A673 (cell line): ENCODE measurements at regions of chr20 and their contacts with region 1.

Region 1: GRCh38 chr20:266596-267562 is 9.4 kb downstream of the DEFB132 start:
- DNase-seq: peak; percentile 92
- H3K4me3 ChIP-seq: peak overlapping the region; percentile 49
- H3K27ac ChIP-seq: peak overlapping the region; percentile 41
- H3K4me1 ChIP-seq: peaks cover 5% of the 10 kb centered on the region
- H3K27me3 ChIP-seq: no peaks in the 10 kb centered on the region
- CTCF ChIP-seq: peak; percentile 97

Region 2: GRCh38 chr20:87372-87771 is 179.5 kb before region 1 on chr20 and contains the start of gene DEFB125:
- CTCF ChIA-PET with region 1: no interaction called
- POLR2A ChIA-PET with region 1: no interaction called
- intact Hi-C with region 1: no loop called
- DNase-seq: no peak
- H3K4me3 ChIP-seq: no peak within 1 kb of the TSS
- H3K27ac ChIP-seq: no peak within 1 kb of the TSS
- H3K4me1 ChIP-seq: no peaks in the 10 kb centered on the region
- H3K27me3 ChIP-seq: peaks cover 56% of the 10 kb centered on the region
- CTCF ChIP-seq: no peak
- total RNA-seq, gene DEFB125: not detected in 2 replicates

Region 3: DNA sequence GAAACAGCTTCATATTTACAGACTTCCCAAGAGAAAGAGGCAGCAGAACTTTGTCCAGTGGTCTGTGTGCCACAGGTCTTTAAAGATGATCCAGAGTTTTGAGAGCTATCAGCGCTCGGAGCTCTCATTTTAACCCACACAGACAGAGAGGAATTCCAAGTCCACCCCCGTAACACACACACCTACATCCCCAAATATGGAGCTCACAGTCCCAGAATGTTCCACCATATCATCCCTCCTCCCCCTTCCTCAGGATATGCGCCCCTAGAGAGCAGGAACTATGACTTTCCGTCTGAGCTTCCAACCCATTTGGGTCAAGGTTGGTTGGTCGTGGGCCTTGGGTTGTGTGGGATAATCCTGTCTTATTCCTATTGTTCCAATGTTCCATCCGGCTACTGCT is 77.3 kb before region 1 on chr20 and contains the start of gene DEFB128:
- CTCF ChIA-PET with region 1: no interaction called
- POLR2A ChIA-PET with region 1: no interaction called
- intact Hi-C with region 1: no loop called
- DNase-seq: no peak
- H3K4me3 ChIP-seq: no peak within 1 kb of the TSS
- H3K27ac ChIP-seq: no peak within 1 kb of the TSS
- H3K4me1 ChIP-seq: no peaks in the 10 kb centered on the region
- H3K27me3 ChIP-seq: peaks cover 12% of the 10 kb centered on the region
- CTCF ChIP-seq: no peak
- total RNA-seq, gene DEFB128: not detected in 2 replicates

Region 4: DNA sequence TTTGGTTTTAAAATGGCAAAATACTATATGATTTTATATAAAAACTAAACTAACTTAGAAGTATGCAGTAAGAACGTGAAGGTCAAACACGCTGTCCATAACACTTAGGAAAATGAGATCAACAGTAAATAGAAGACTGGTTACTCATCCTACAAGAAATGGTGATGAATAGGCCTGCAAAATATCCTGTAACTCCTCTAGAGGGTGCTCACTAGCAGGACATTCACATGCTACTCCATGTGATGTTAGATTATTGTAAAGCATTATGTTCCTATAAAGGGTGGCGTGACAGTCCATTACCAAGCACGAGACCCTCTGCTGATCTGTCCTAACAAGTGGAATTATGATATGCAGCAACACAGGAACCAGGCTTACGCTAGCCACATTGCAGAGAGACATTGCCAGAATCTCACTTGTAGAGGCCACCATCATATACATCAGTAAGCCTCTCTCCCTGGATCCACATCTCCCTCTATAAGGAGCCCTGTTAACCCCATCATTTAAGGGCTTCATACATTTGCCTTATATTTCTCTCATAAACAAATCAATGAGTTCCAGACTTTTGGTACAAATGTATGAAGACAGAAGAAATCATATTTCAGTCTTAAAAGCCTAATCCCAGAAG is 57.8 kb before region 1 on chr20:
- CTCF ChIA-PET with region 1: interaction called, 5 read pairs
- POLR2A ChIA-PET with region 1: no interaction called
- intact Hi-C with region 1: loop called (anchors 2 kb)
- DNase-seq: peak; percentile 69
- H3K4me3 ChIP-seq: no peak overlapping the region
- H3K27ac ChIP-seq: no peak overlapping the region
- H3K4me1 ChIP-seq: no peaks in the 10 kb centered on the region
- H3K27me3 ChIP-seq: no peaks in the 10 kb centered on the region
- CTCF ChIP-seq: peak; percentile 76